ENCODE measurements at regions of chr7 and their contacts with region 1.

Region 1: GRCh38 chr7:116354546-116355408 is 144.4 kb downstream of the TES start:
- DNase-seq: peak; percentile 96
- ATAC-seq: peak; percentile 75
- H3K4me3 ChIP-seq: peak overlapping the region; percentile 15 to 41
- H3K27ac ChIP-seq: peak overlapping the region; percentile 89
- H3K4me1 ChIP-seq: peaks cover 61 to 66% of the 10 kb centered on the region in 2 experiments
- H3K27me3 ChIP-seq: no peaks in the 10 kb centered on the region
- CTCF ChIP-seq: no peak
- POLR2A ChIP-seq: no peak
- RAD21 ChIP-seq: 0 out of 2 replicates have a peak, but pooled peaks have one; percentile 11

Region 2: GRCh38 chr7:115861351-115861750 is 493.4 kb before region 1 on chr7:
- CTCF ChIA-PET with region 1: no interaction called
- POLR2A ChIA-PET with region 1: no interaction called
- RAD21 ChIA-PET with region 1: no interaction called
- intact Hi-C with region 1: no loop called
- DNase-seq: no peak
- ATAC-seq: no peak
- H3K4me3 ChIP-seq: no peak overlapping the region
- H3K27ac ChIP-seq: no peak overlapping the region
- H3K4me1 ChIP-seq: no peaks in the 10 kb centered on the region
- H3K27me3 ChIP-seq: no peaks in the 10 kb centered on the region
- CTCF ChIP-seq: no peak
- POLR2A ChIP-seq: no peak
- RAD21 ChIP-seq: no peak

Region 3: GRCh38 chr7:116271963-116272839 is 82.6 kb before region 1 on chr7:
- CTCF ChIA-PET with region 1: no interaction called
- POLR2A ChIA-PET with region 1: interaction called, 4 read pairs
- RAD21 ChIA-PET with region 1: no interaction called
- intact Hi-C with region 1: loop called (anchors 1 kb)
- DNase-seq: peak; percentile 85
- ATAC-seq: peak; percentile 97
- H3K4me3 ChIP-seq: peak overlapping the region in 1 of 2 experiments; percentile 38; a peak in 2 of 4 replicates
- H3K27ac ChIP-seq: peak overlapping the region; percentile 89
- H3K4me1 ChIP-seq: peaks cover 35 to 64% of the 10 kb centered on the region in 2 experiments
- H3K27me3 ChIP-seq: no peaks in the 10 kb centered on the region
- CTCF ChIP-seq: no peak
- POLR2A ChIP-seq: no peak
- RAD21 ChIP-seq: peak; percentile 29; the same call in 1 of the 2 replicates

Region 4: DNA sequence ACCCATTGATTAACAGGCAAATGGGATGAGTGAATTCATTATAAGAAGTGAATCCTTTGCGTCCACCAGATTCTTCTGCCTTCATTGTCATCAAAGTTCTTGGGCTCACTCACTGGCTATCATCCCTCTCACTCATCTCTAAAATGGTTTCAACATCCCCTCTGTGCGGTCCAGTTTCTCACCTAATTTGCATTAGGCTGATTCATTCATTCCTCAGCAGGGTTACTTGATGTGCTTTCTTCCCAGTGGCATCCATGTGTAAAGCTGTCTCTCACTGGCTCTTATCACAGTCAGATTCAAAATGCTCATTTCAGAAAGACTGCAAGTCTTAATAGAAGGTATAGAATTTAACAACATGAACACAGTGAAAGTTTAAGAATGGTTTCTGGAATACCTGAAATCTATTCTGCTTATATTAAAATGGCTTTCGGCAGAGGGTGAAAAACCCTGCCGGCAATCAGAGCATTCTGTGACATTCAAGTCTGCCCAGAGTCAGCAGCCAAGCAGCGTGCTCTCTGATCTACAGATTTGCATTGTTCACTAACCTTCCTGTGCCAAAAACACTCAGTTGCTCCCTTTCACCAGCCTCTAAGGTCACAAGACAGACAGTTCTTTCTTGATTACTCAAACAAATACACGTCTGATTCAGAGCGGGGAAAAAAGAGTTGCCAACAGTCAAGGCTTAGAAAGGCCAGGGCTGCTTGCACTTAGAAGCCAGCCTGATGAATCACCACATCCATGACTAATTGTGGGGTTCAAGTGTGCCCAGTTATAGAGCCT is 37.8 kb before region 1 on chr7:
- CTCF ChIA-PET with region 1: no interaction called
- POLR2A ChIA-PET with region 1: no interaction called
- RAD21 ChIA-PET with region 1: no interaction called
- intact Hi-C with region 1: loop called (anchors 1 kb)
- DNase-seq: peak; percentile 99
- ATAC-seq: peak; percentile 90
- H3K4me3 ChIP-seq: peak overlapping the region; percentile 6 to 34
- H3K27ac ChIP-seq: peak overlapping the region; percentile 89
- H3K4me1 ChIP-seq: peaks cover 29 to 49% of the 10 kb centered on the region in 2 experiments
- H3K27me3 ChIP-seq: no peaks in the 10 kb centered on the region
- CTCF ChIP-seq: no peak
- POLR2A ChIP-seq: no peak
- RAD21 ChIP-seq: peak; percentile 44

Region 5: DNA sequence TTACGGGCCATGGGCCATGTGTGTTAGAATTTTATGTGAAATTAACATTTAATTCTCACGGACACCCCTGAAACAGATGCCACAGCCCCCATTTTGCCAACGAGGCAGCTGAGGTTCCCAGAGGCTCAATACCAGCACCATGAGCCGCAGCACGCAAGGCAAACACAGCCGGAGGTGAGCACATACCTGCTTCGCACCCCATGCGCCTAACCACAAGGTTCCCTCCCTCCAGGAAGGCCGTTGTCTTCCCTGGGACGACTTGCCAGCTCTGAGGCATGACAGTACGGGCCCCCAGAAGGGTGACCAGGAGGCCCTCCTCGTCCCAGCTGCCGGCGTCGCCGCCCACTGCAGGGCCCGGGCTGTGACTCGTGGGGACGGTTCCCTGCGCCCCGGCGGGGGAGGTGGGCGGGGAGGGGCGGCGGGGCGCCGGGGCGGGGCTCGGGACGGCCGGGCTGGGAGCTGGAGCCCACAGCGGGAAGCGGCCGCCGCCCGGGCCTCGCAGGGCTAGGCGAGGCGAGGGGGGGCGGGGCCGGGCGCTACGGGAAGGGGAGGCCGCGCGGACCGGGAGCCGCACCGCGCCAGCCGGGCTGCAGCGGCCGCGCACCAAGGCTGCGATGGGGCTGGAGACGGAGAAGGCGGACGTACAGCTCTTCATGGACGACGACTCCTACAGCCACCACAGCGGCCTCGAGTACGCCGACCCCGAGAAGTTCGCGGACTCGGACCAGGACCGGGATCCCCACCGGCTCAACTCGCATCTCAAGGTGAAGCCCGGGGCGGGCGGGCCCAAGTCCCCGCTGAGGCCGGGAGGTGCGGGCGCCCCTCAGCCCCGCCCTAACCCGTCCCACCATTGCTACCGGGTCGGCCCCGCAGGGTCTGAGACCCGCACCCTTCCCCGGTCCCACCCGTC is 144.6 kb after region 1 on chr7 and contains the start of gene CAV2:
- CTCF ChIA-PET with region 1: no interaction called
- POLR2A ChIA-PET with region 1: no interaction called
- RAD21 ChIA-PET with region 1: no interaction called
- intact Hi-C with region 1: loop called (anchors 5 kb)
- DNase-seq: peak; percentile 74
- ATAC-seq: peak; percentile 81
- H3K4me3 ChIP-seq: peak within 1 kb of the TSS; percentile 73 to 95
- H3K27ac ChIP-seq: peak within 1 kb of the TSS; percentile 98
- H3K4me1 ChIP-seq: peaks cover 23 to 64% of the 10 kb centered on the region in 2 experiments
- H3K27me3 ChIP-seq: no peaks in the 10 kb centered on the region
- CTCF ChIP-seq: no peak
- POLR2A ChIP-seq: peak; percentile 20
- RAD21 ChIP-seq: peak; percentile 36; the same call in 1 of the 2 replicates
- total RNA-seq, gene CAV2: 157 TPM

Measured in HCT116 (cell line).